Esophagus muscularis mucosa (tissue), 4 donors: ENCODE measurements at regions of chr3 and their contacts with region 1.

Region 1: GRCh38 chr3:31550452-31551251 is 17.9 kb downstream of the STT3B start:
- DNase-seq: no peak
- H3K4me3 ChIP-seq: no peak overlapping the region
- H3K27ac ChIP-seq: no peak overlapping the region
- H3K4me1 ChIP-seq: peaks cover 24 to 58% (median 50%) of the 10 kb centered on the region in 4 donors
- H3K27me3 ChIP-seq: no peaks in the 10 kb centered on the region
- CTCF ChIP-seq: peak; percentile 31 to 73 (median 63)
- EP300 ChIP-seq: no peak
- POLR2A ChIP-seq: no peak

Region 2: DNA sequence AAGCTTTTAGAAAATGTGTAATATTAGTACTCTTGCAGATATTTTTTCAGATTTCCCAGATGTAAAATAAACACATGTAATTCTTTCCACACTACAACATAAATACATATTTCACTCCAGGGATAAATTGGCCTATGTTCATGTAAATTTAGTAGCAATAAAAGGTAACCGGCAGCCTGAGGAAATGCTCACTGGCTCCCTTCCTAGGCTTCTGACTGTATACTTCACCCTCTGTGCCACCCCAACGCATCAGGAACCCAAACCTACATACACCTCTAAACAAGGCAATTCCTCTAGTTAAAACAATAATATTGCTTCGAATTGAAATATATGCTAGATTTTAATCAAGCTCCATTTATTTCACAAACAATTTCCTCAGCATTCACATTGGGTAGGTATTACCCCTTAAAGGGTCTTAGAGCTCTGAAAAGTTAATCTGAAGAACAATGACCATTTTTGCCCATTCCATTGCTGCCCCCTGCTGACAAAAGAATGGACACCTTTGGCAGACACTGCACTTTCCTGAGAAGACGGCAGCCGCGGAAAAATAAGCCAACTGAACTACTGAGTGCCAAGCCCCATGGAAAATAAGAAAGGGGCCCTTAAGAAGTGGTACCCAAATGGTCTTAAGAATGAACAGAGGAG is 217.9 kb after region 1 on chr3:
- intact Hi-C with region 1: loop called (anchors 5 kb)
- DNase-seq: no peak
- H3K4me3 ChIP-seq: no peak overlapping the region
- H3K27ac ChIP-seq: no peak overlapping the region
- H3K4me1 ChIP-seq: peaks cover 0 to 5% (median 2%) of the 10 kb centered on the region in 4 donors
- H3K27me3 ChIP-seq: no peaks in the 10 kb centered on the region
- CTCF ChIP-seq: peak; percentile 55 to 69 (median 66)
- EP300 ChIP-seq: no peak
- POLR2A ChIP-seq: no peak